PC-9 (cell line): ENCODE measurements at regions of chr1 and their contacts with region 1.

Region 1: GRCh38 chr1:204806943-204807687 is 63.5 kb upstream of the NFASC start:
- DNase-seq: peak; percentile 66 to 83
- H3K4me3 ChIP-seq: peak overlapping the region; percentile 56
- H3K27ac ChIP-seq: no peak overlapping the region
- H3K4me1 ChIP-seq: peaks cover 4% of the 10 kb centered on the region; the same call in 1 of the 2 replicates
- H3K27me3 ChIP-seq: peaks cover 14% of the 10 kb centered on the region; the same call in 1 of the 2 replicates
- CTCF ChIP-seq: peak; percentile 99

Region 2: DNA sequence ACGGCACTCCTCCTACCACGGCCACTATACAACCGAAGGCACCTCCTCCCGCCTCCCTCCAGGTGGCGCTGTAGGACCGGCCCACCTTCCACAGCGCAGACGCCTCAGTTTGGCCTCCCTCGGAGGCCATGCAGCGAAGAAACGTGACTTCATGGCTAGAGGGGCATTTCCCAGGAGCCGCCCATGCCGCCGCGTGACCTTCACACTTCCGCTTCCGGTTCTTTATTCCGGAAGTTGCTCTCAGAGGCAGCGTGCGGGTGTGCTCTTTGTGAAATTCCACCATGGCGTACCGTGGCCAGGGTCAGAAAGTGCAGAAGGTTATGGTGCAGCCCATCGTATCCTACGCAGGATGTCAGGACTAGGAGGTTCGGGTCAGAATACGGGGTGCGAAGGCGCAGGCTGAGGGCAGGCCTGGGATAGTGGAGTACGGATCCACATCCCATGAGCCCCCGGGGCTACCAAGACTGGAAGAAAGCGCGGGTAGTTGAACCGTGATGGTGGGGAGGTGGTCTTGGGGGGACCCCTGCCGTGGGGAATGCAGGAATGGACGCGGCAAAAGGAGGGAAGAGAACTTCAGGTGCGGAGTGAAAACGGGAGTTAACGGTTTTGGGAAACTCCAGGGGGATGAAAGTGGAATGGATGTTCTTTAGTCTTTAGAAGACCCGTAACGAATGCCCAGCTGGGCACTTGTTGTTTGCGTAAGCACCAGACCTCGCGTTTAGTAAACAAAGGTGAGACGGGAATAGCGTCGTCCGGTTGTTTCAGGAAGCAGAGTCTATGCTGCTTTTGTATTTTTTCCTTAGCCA is 945.5 kb before region 1 on chr1 and contains the start of gene SNRPE:
- CTCF ChIA-PET with region 1: no interaction called
- POLR2A ChIA-PET with region 1: interaction called, 4 read pairs
- intact Hi-C with region 1: loop called (anchors 1 kb)
- DNase-seq: peak; percentile 91 to 96
- H3K4me3 ChIP-seq: peak within 1 kb of the TSS; percentile 85
- H3K27ac ChIP-seq: peak within 1 kb of the TSS; percentile 66
- H3K4me1 ChIP-seq: peaks cover 21% of the 10 kb centered on the region
- H3K27me3 ChIP-seq: no peaks in the 10 kb centered on the region
- CTCF ChIP-seq: peak; percentile 95
- total RNA-seq, gene SNRPE: 201 and 218 TPM in 2 replicates

Region 3: DNA sequence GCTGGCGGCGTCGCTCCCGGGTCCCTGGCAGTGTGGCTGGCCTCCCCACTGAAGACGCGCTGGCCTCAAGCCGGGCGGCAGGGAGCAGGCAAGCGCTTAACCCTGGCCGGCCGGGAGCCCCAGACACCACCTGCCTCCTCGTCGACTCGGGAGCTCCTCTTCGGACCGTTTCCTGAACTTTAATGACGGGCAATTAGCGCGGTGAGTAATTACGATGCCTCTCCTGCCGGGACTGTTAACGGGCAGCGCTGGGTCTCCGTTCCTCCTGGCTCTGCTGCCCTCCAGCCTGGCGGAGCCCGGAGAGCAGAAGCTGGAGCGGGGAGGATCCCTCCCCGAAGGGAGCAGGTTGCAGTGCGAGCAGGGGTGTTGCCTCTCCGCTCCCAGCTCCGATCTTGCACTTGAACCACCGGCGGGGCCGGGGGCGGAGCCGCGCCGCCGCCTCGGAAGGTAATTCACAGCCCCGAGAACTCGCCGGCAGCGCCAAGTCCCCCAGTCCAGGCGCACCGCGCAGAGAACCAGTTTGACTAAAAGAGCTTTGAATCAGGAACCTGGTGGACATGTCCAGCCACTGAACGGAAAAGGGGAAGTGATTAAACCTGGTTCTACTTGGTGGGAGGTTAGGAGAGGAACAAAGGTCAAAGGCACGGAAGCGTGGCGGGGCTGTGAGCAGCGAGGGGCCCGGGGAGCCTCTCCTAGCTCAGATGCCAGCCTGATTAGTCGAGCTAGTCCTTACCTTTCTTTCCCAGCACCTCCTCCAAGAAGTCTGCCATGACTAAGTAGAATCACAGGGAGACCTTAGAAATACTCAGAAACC is 429.1 kb before region 1 on chr1:
- CTCF ChIA-PET with region 1: no interaction called
- POLR2A ChIA-PET with region 1: no interaction called
- intact Hi-C with region 1: loop called (anchors 5 kb)
- DNase-seq: peak; percentile 75 to 79
- H3K4me3 ChIP-seq: peak overlapping the region; percentile 77
- H3K27ac ChIP-seq: peak overlapping the region; percentile 82
- H3K4me1 ChIP-seq: peaks cover 60% of the 10 kb centered on the region
- H3K27me3 ChIP-seq: no peaks in the 10 kb centered on the region
- CTCF ChIP-seq: peak; percentile 23; the same call in 1 of the 2 replicates

Region 4: GRCh38 chr1:204506961-204507387 is 300.1 kb before region 1 on chr1:
- CTCF ChIA-PET with region 1: interaction called, 27 read pairs
- POLR2A ChIA-PET with region 1: no interaction called
- intact Hi-C with region 1: loop called (anchors 1 kb)
- DNase-seq: peak; percentile 87 to 88
- H3K4me3 ChIP-seq: peak overlapping the region; percentile 65
- H3K27ac ChIP-seq: peak overlapping the region; percentile 93
- H3K4me1 ChIP-seq: peaks cover 40% of the 10 kb centered on the region
- H3K27me3 ChIP-seq: no peaks in the 10 kb centered on the region
- CTCF ChIP-seq: 0 out of 2 replicates have a peak, but pooled peaks have one; percentile 11

Region 5: GRCh38 chr1:204565617-204566582 is 241.2 kb before region 1 on chr1:
- CTCF ChIA-PET with region 1: interaction called, 42 read pairs
- POLR2A ChIA-PET with region 1: no interaction called
- intact Hi-C with region 1: loop called (anchors 1 kb)
- DNase-seq: peak; percentile 58 to 94
- H3K4me3 ChIP-seq: no peak overlapping the region
- H3K27ac ChIP-seq: peak overlapping the region; percentile 36
- H3K4me1 ChIP-seq: peaks cover 23% of the 10 kb centered on the region
- H3K27me3 ChIP-seq: no peaks in the 10 kb centered on the region
- CTCF ChIP-seq: peak; percentile 89

Region 6: GRCh38 chr1:204829133-204829825 is 22.2 kb after region 1 on chr1:
- CTCF ChIA-PET with region 1: no interaction called
- POLR2A ChIA-PET with region 1: no interaction called
- intact Hi-C with region 1: no loop called
- DNase-seq: no peak
- H3K4me3 ChIP-seq: no peak overlapping the region
- H3K27ac ChIP-seq: no peak overlapping the region
- H3K4me1 ChIP-seq: no peaks in the 10 kb centered on the region
- H3K27me3 ChIP-seq: peaks cover 79% of the 10 kb centered on the region
- CTCF ChIP-seq: no peak

Region 7: DNA sequence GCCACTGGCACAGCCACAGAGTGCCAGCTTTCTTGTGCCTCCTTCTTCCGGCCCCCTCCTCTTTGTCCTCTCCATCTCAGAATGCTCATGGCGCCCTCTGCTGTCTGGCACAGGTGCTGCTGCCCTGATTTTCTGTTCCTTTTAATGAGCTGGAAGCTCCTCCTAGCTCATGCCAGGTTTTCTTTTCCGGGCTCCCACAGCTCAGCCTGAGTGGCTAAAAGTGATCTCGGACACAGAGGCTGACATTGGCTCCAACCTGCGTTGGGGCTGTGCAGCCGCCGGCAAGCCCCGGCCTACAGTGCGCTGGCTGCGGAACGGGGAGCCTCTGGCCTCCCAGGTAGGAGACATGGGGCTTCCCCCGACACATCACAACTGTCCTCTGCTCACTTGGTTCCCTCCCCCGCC is 254.6 kb after region 1 on chr1:
- CTCF ChIA-PET with region 1: interaction called, 9 read pairs
- POLR2A ChIA-PET with region 1: no interaction called
- intact Hi-C with region 1: loop called (anchors 1 kb)
- DNase-seq: peak; percentile 37 to 77
- H3K4me3 ChIP-seq: no peak overlapping the region
- H3K27ac ChIP-seq: no peak overlapping the region
- H3K4me1 ChIP-seq: no peaks in the 10 kb centered on the region
- H3K27me3 ChIP-seq: peaks cover 84% of the 10 kb centered on the region
- CTCF ChIP-seq: peak; percentile 91

Region 8: DNA sequence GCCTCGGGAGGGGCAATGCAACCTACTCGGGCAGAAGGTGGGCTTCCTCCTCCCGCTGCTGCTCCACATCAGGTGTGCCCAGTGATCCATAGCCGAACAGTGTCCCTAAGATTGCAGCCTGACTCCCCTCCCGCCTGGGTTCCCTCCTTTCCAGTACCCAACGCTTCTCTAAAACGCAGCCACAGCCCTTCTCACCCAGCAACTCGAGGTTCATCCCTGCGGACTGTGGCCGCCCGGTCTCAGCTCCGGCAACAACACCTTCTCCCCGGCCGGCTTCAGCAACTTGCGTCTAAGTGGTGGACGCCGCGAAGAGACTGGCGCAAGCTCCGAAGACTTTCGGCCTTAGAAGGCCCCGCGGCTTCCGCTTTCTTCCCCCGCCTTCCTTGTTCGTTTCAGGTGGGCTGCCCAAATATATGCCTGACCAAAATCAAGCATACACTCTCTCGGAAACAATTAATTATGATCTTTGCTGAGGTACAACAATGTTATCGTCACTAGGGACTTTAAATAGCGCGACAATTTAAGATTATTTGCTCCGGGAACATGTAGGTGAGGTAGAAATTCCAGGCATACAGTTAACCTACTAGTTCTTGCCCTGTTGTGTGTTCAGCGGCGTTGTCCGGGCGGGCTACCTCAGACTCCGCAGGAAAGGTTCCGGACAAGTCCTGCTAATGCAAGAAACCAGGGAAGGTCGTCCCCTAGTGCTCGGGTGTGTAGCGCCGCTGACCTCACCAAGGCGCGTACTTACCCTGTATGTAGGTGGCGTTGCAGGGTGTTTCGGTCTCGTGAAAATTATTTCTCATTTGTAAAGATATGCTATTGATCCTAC is 314.8 kb after region 1 on chr1 and contains the start of gene RBBP5:
- CTCF ChIA-PET with region 1: no interaction called
- POLR2A ChIA-PET with region 1: no interaction called
- intact Hi-C with region 1: no loop called
- DNase-seq: peak; percentile 94 to 95
- H3K4me3 ChIP-seq: peak within 1 kb of the TSS; percentile 84
- H3K27ac ChIP-seq: peak within 1 kb of the TSS; percentile 79
- H3K4me1 ChIP-seq: peaks cover 13% of the 10 kb centered on the region
- H3K27me3 ChIP-seq: no peaks in the 10 kb centered on the region
- CTCF ChIP-seq: peak; percentile 63
- total RNA-seq, gene RBBP5: 17.7 and 17.9 TPM in 2 replicates

Region 9: GRCh38 chr1:205504311-205504984 is 697.3 kb after region 1 on chr1 and contains the start of gene CDK18:
- CTCF ChIA-PET with region 1: no interaction called
- POLR2A ChIA-PET with region 1: no interaction called
- intact Hi-C with region 1: no loop called
- DNase-seq: peak; percentile 71 to 78
- H3K4me3 ChIP-seq: peak within 1 kb of the TSS; percentile 88
- H3K27ac ChIP-seq: peak within 1 kb of the TSS; percentile 31
- H3K4me1 ChIP-seq: peaks cover 14% of the 10 kb centered on the region
- H3K27me3 ChIP-seq: no peaks in the 10 kb centered on the region
- CTCF ChIP-seq: no peak
- total RNA-seq, gene CDK18: 35.3 and 36.2 TPM in 2 replicates